Right cardiac atrium (tissue), 5 donors: ENCODE measurements at regions of chr11 and their contacts with region 1.

Region 1: DNA sequence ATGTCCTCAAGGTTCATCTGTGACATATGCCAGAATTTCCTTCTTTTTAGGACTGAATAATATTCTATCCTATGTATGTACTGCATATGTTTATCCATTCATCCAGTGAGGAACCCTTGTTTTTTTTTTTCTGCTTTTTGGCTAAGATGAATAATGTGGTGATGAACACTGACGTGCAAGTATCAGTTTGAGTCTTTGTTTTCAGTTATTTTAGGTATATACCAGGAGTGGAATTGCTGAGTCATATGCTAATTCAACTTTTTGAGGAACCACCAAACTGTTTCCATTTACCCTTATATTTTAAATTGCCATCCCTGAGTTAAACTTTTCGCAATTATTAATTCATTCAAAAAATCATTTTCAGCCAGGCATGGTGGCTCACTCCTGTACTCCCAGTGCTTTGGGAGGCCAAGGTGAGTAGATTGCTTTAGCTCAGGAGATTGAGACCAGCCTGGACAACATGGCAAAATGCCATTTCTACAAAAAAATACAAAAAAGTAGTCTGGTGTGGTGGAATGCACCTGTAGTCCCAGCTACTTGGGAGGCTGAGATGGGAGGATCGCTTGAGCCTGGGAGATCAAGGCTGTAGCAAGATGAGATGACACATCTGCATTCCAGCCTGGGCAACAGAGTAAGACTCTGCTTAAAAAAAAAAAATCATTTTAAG is 64.2 kb downstream of the MICAL2 start:
- DNase-seq: no peak
- ATAC-seq: no peak
- H3K4me3 ChIP-seq: no peak overlapping the region
- H3K27ac ChIP-seq: no peak overlapping the region
- H3K4me1 ChIP-seq: peaks cover 10% of the 10 kb centered on the region
- H3K27me3 ChIP-seq: no peaks in the 10 kb centered on the region

Region 2: DNA sequence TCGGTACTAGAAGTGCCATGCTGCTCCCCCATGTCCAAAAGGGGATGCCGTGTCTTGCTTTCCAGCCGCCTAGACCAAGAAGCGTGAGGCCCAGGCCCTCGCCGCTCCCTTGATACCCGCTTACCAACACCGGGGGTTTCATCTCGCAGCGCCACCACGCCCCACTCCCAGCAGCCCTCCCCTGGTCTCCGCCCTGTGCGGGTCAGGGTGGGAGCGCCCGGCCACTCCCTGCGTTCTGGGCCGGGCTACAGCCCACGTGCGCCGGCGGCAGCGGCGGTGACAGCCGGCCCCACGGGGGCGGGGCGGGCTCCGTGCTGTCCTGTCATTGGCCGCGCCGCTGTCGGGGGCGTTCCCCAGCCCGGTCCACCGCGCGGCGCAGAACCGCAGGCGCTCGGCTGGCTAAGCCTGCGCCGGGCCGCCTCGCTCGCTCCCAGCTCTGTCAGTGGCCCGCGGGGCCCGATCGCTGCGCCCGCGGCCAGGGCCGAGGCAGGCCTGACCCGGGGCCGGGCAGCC is 64.4 kb before region 1 on chr11 and contains the start of gene MICAL2:
- intact Hi-C with region 1: loop called in 1 of 4 experiments (anchors 5 kb)
- DNase-seq: peak; percentile 93 to 97 (median 96)
- ATAC-seq: peak; percentile 97 to 98
- H3K4me3 ChIP-seq: peak within 1 kb of the TSS; percentile 87
- H3K27ac ChIP-seq: peak within 1 kb of the TSS; percentile 31
- H3K4me1 ChIP-seq: peaks cover 16% of the 10 kb centered on the region
- H3K27me3 ChIP-seq: no peaks in the 10 kb centered on the region
- total RNA-seq, gene MICAL2: 92.1 to 115 (median 95.1) TPM

Region 3: DNA sequence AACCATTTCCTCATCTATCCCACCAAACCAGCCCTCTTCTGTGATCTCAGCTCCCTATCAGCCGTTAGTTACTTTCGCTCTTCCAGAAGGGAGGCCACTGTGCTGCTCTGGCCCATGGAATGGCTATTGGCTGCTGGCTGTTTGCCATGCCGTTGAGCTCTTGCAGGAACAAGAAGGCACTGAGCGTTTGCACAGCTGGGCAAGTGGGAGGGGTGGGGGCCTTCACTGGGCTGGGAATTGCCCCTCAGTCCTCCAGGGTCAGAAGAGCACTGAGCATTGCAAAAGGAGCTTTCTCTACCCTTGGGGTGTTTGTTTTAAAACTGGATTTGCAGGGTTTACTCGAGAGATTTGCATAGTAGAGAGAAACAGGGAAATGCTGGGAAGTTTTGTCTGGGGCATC is 73.7 kb after region 1 on chr11:
- intact Hi-C with region 1: no loop called
- DNase-seq: peak; percentile 83 to 95 (median 93)
- ATAC-seq: peak; percentile 61 to 80
- H3K4me3 ChIP-seq: no peak overlapping the region
- H3K27ac ChIP-seq: peak overlapping the region; percentile 26
- H3K4me1 ChIP-seq: peaks cover 28% of the 10 kb centered on the region
- H3K27me3 ChIP-seq: no peaks in the 10 kb centered on the region

Region 4: DNA sequence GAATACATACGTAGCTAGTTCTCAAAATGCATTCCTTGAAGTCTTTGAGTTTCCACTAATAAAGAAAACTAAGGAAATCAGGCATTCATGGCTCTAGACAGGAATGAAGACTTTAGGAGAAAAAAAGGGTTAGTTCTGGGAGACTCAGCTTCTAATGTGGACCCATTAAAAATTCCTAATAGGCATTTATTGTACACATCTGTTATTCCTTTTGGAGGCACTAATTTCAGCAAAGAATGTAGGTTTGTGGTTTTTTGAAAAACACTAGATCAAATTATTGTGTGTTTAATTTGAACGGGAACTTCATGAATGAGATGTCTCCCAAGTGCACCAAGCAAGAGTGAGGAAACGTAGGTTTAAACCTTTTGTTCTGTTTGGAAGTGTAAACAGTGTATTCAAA is 245.4 kb after region 1 on chr11:
- intact Hi-C with region 1: no loop called
- DNase-seq: no peak
- ATAC-seq: no peak
- H3K4me3 ChIP-seq: no peak overlapping the region
- H3K27ac ChIP-seq: no peak overlapping the region
- H3K4me1 ChIP-seq: peaks cover 4% of the 10 kb centered on the region
- H3K27me3 ChIP-seq: no peaks in the 10 kb centered on the region